Activated CD4-positive, alpha-beta memory T cell treated with anti-CD3 and anti-CD28 coated beads for 36 hours (primary cell): ENCODE measurements at regions of chr12 and their contacts with region 1.

Region 1: GRCh38 chr12:53500776-53501614 is at the start of gene TARBP2:
- DNase-seq: peak; percentile 96
- H3K4me3 Mint-ChIP-seq: peak within 1 kb of the TSS; percentile 84
- H3K27ac Mint-ChIP-seq: peak within 1 kb of the TSS; percentile 93
- H3K4me1 Mint-ChIP-seq: peaks cover 39% of the 10 kb centered on the region
- H3K27me3 Mint-ChIP-seq: no peaks in the 10 kb centered on the region
- total RNA-seq, gene TARBP2: 27.5 to 29.7 TPM

Region 2: GRCh38 chr12:52920937-52921826 is 579.8 kb before region 1 on chr12:
- CTCF ChIA-PET with region 1: no interaction called
- POLR2A ChIA-PET with region 1: no interaction called
- intact Hi-C with region 1: no loop called
- DNase-seq: no peak
- H3K4me3 Mint-ChIP-seq: no peak overlapping the region
- H3K27ac Mint-ChIP-seq: no peak overlapping the region
- H3K4me1 Mint-ChIP-seq: peaks cover 2% of the 10 kb centered on the region
- H3K27me3 Mint-ChIP-seq: no peaks in the 10 kb centered on the region

Region 3: GRCh38 chr12:53005986-53006809 is 494.8 kb before region 1 on chr12 and contains the start of gene EIF4B:
- CTCF ChIA-PET with region 1: no interaction called
- POLR2A ChIA-PET with region 1: no interaction called
- intact Hi-C with region 1: loop called (anchors 1 kb)
- DNase-seq: peak; percentile 100
- H3K4me3 Mint-ChIP-seq: peak within 1 kb of the TSS; percentile 98
- H3K27ac Mint-ChIP-seq: peak within 1 kb of the TSS; percentile 98
- H3K4me1 Mint-ChIP-seq: peaks cover 50% of the 10 kb centered on the region
- H3K27me3 Mint-ChIP-seq: no peaks in the 10 kb centered on the region
- total RNA-seq, gene EIF4B: 686 to 718 TPM

Region 4: DNA sequence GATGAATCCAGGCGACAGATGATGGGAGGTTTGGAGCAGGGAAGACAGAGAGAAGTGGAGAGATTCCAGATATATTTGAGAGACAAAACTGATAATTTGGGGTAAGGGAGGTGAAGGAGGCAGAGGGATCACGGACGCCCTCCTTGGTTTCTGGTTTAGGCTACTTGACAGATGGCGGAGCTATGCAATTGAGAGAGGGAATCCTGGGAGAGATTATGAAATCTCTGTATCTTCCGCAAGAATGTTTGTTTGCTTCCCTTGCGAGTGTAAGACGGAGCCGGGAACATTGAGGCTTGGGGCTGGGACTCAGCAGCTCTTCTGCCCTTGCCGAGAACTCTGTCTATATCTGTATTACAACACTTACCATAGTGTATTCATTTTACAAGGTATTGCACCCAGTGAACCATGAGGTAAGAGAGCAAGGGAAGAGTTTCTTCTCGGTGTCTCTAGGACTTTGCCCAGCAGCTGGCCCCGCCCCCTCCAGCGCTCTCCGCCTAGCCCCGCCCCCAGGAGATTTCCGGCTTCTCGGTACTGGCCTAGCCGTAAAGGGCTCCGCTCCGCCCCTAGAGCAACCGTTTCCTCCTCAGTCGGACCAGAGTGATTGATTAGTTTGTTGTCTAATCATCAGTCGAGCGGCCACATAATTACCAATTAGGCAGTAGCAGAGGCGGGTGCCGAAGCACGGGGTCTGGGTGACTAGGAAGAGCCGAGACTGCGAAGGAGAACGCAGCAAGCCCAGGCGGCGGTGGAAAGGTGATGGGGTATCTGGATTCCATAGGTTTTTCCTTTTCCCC is 59.8 kb before region 1 on chr12 and contains the start of gene PRR13:
- CTCF ChIA-PET with region 1: no interaction called
- POLR2A ChIA-PET with region 1: interaction called, 3 read pairs
- intact Hi-C with region 1: loop called (anchors 1 kb)
- DNase-seq: peak; percentile 100
- H3K4me3 Mint-ChIP-seq: peak within 1 kb of the TSS; percentile 97
- H3K27ac Mint-ChIP-seq: peak within 1 kb of the TSS; percentile 93
- H3K4me1 Mint-ChIP-seq: peaks cover 37% of the 10 kb centered on the region
- H3K27me3 Mint-ChIP-seq: no peaks in the 10 kb centered on the region
- total RNA-seq, gene PRR13: 218 to 221 TPM

Region 5: DNA sequence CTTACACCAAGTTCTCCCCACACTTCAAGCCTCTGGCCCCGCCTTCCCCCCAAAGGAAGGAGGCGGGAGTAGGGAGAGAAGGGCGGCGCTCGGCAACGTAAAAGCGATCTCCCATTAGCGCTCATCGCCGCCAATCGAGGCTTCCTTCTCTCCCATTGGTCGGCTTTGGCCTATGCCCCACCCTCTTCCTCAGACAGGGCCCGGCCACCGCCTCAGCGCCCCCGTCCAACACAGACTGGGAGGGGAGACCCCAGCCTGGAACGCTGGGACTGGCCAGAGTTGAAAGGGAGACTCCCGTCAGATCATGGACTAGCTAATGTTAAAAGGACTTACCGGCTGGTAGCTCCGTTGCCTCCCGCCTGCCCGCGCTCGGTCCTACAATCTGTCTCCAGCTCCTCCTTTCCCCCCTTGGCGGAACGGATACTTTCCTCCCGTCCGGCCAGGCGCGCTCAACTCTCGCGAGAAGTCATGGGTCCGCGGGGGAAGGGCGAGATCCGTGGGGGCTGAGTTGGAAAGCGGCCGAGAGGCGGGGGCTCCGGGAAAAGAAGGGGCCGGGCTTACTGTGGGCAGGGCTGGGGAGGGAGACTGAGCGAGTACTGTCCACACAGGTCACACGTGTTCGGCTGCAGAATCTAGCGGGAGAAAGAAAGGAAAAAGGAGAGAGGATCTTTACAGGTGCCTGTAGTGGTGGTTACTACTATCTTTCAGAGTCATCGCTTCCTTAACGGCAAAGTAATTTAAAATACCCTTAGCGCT is 125.1 kb after region 1 on chr12 and contains the start of gene ATF7:
- CTCF ChIA-PET with region 1: no interaction called
- POLR2A ChIA-PET with region 1: no interaction called
- intact Hi-C with region 1: loop called (anchors 1 kb)
- DNase-seq: peak; percentile 99
- H3K4me3 Mint-ChIP-seq: peak within 1 kb of the TSS; percentile 97
- H3K27ac Mint-ChIP-seq: peak within 1 kb of the TSS; percentile 94
- H3K4me1 Mint-ChIP-seq: peaks cover 43% of the 10 kb centered on the region
- H3K27me3 Mint-ChIP-seq: no peaks in the 10 kb centered on the region
- total RNA-seq, gene ATF7: 19.3 to 20.7 TPM

Region 6: GRCh38 chr12:53675651-53676453 is 174.9 kb after region 1 on chr12 and contains the start of gene ATP5MC2:
- CTCF ChIA-PET with region 1: interaction called, 3 read pairs
- POLR2A ChIA-PET with region 1: interaction called, 5 read pairs
- intact Hi-C with region 1: loop called (anchors 1 kb)
- DNase-seq: peak; percentile 98
- H3K4me3 Mint-ChIP-seq: peak within 1 kb of the TSS; percentile 81
- H3K27ac Mint-ChIP-seq: peak within 1 kb of the TSS; percentile 89
- H3K4me1 Mint-ChIP-seq: peaks cover 26% of the 10 kb centered on the region
- H3K27me3 Mint-ChIP-seq: peaks cover 19% of the 10 kb centered on the region
- total RNA-seq, gene ATP5MC2: 378 TPM

Region 7: DNA sequence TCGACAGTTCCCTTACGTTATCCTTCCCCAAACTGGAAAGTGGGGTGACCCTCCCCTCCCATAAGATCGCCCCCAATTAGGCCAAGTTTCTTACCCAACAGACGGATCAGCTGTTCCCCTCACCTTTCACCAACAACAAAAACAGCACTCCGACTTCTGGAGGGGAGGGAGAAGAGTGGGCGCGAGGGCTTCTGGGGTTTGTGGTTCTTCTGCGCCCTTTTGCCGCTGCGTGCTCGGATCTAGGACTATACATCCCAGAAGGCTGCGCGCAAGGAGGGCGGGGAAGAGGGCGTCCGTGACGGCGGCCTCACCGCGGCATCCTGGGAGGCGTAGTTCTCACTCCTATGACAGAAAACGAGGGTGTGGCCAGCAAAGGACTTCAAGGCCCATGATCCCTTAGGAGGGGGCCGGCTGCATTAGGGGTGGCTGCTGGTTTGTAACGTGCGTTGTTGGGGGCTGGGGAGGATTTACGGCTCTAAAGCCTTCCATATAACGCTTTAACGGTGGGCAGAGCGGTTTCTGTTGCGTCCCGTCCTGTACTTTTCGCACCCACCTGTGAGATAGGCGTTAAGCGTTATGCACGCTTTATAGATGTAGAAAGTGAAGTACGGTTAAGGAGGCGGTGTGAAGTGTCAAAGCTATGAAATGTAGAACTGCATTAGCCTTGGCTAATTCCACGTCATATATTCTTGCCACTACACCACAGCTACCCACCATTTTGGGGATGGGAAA is 226.5 kb after region 1 on chr12 and contains the start of gene CALCOCO1:
- CTCF ChIA-PET with region 1: no interaction called
- POLR2A ChIA-PET with region 1: no interaction called
- intact Hi-C with region 1: loop called (anchors 1 kb)
- DNase-seq: peak; percentile 99
- H3K4me3 Mint-ChIP-seq: peak within 1 kb of the TSS; percentile 87
- H3K27ac Mint-ChIP-seq: peak within 1 kb of the TSS; percentile 77
- H3K4me1 Mint-ChIP-seq: peaks cover 19% of the 10 kb centered on the region
- H3K27me3 Mint-ChIP-seq: no peaks in the 10 kb centered on the region
- total RNA-seq, gene CALCOCO1: 21.2 to 23.7 TPM